ENCODE measurements at regions of chr2 and their contacts with region 1.

Region 1: GRCh38 chr2:100562732-100563720 is at the start of gene PDCL3:
- DNase-seq: peak; percentile 90 to 99 (median 96)
- ATAC-seq: peak; percentile 85 to 90
- H3K4me3 Mint-ChIP-seq: peak within 1 kb of the TSS; percentile 92 to 100 (median 98)
- H3K27ac Mint-ChIP-seq: peak within 1 kb of the TSS; percentile 97 to 99 (median 99)
- H3K4me1 Mint-ChIP-seq: peaks cover 18 to 40% (median 33%) of the 10 kb centered on the region in 4 donors
- H3K27me3 Mint-ChIP-seq: no peaks in the 10 kb centered on the region
- polyA plus RNA-seq, gene PDCL3: 54.8 to 67.4 (median 58.4) TPM

Region 2: GRCh38 chr2:100416935-100417710 is 145.9 kb before region 1 on chr2 and contains the start of gene CHST10:
- POLR2A ChIA-PET with region 1: interaction called, 11 read pairs
- DNase-seq: peak; percentile 20 to 65 (median 45)
- ATAC-seq: peak; percentile 89 to 96
- H3K4me3 Mint-ChIP-seq: peak within 1 kb of the TSS; percentile 86 to 97 (median 94)
- H3K27ac Mint-ChIP-seq: peak within 1 kb of the TSS; percentile 38 to 92 (median 72)
- H3K4me1 Mint-ChIP-seq: peaks cover 11 to 31% (median 26%) of the 10 kb centered on the region in 4 donors
- H3K27me3 Mint-ChIP-seq: no peaks in the 10 kb centered on the region
- polyA plus RNA-seq, gene CHST10: 5.0 to 8.2 (median 5.0) TPM

Region 3: DNA sequence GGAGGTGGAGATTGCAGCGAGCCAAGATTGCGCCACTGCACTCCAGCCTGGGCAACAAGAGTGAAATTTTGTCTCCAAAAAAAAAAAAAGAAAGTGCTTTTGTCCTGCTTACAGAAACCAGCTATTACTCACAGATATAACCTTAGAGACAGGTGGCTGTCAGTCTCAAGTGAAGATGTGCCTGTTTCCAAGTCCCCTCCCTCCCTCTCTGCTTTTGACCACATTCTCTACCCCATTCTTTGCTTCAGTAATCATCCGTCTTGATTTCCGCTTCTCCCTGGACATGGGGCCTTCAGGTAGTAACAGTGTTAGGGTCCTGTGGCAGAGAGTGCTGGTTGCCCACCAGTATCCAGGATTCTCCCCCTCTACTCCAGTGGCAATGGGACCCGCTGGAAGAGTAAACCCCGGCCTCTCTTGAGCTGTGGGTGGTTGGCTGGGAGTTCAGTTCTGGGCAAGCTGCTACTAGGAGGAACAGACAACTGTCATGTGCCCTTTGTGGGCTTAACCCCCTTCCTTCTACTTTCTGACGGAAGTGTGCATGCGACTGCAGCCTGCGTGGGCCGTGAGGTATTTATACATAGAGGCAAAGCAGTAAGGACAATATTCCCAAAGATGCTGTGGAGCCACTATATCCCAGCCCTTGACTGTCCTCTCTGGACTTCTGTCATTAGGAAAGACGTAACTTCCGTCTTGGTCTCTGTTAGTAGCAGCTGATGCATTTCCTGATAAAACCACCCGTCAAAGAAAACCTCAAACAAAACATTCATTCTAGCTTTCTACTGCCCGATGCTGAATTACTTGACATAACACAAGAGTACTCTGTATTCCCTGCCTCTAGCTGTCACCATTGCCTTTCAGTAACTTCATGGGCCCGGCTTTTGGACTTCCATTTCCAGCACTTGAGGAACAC is 17.6 kb after region 1 on chr2:
- POLR2A ChIA-PET with region 1: interaction called, 88 read pairs
- DNase-seq: peak; percentile 23 to 85 (median 74)
- ATAC-seq: peak; percentile 81 to 89
- H3K4me3 Mint-ChIP-seq: peak overlapping the region; percentile 52 to 88 (median 72)
- H3K27ac Mint-ChIP-seq: peak overlapping the region; percentile 92 to 99 (median 98)
- H3K4me1 Mint-ChIP-seq: peaks cover 15 to 49% (median 43%) of the 10 kb centered on the region in 4 donors
- H3K27me3 Mint-ChIP-seq: no peaks in the 10 kb centered on the region

Region 4: DNA sequence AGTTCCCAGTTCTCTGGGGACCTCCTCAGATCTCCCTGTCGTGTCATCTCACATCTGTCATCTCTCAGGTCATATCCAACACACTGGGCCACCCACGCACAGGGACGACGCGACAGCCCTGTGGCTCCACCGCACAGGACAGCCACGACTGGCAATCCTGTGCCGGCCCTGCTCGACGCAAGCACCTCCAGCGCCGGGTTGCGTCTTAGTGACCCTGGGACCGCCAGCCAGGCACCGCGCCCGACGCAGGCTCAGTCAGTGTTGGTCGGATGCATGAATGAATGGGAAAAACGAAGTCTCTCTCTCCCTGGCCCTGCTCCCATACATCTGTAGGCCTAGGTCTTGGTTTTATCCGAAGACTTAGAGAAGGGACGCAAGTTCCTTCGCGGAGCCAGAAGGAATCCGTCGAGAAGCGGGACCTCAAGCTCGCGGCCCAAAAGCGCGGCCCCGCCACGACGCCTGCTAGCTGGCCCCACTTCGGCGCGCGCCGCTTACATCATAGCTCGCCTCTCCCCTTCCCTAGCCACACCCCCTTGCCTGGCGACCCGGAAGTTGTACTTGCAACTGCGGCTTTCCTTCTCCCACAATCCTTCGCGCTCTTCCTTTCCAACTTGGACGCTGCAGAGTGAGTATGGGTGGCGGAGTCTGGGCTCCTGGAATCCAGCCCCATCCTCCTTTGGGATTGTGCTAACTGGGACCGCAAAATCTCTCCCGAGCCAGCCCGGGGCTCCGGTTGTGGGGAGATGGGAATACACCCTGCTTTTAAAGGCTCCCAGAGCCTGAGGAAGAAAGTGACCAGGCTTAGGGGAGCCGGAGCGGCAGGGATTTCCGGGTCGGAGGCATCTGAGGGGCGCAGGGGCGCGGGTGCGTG is 438.9 kb after region 1 on chr2 and contains the start of gene RPL31:
- POLR2A ChIA-PET with region 1: interaction called, 28 read pairs
- DNase-seq: peak; percentile 88 to 98 (median 94)
- ATAC-seq: peak; percentile 93 to 94
- H3K4me3 Mint-ChIP-seq: peak within 1 kb of the TSS; percentile 82 to 97 (median 94)
- H3K27ac Mint-ChIP-seq: peak within 1 kb of the TSS; percentile 74 to 99 (median 98)
- H3K4me1 Mint-ChIP-seq: peaks cover 27 to 53% (median 47%) of the 10 kb centered on the region in 4 donors
- H3K27me3 Mint-ChIP-seq: no peaks in the 10 kb centered on the region
- polyA plus RNA-seq, gene RPL31: 7,517 to 8,494 (median 8,327) TPM

Measured in naive thymus-derived CD8-positive, alpha-beta T cell (primary cell).